Endothelial cell of umbilical vein (primary cell): ENCODE measurements at regions of chr17 and their contacts with region 1.

Region 1: DNA sequence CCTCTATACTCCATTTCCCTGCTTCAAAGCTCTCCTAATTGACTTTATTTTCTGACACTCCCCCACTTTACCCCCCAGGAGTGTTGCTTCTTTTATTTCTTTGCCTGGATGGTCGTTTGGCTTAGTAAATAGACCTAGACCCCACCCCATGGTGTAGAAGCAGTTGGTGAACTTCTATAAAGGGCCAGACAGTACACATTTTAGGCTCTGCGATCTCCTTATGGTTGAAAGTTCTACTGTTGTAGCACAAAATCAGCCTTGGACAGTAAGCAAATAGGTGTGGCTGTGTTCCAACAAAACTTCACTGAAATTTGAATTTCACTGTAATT is 31.9 kb downstream of the ZNF287 start:
- DNase-seq: no peak
- H3K4me3 ChIP-seq: no peak overlapping the region
- H3K27ac ChIP-seq: no peak overlapping the region
- H3K4me1 ChIP-seq: peaks cover 2% of the 10 kb centered on the region
- H3K27me3 ChIP-seq: peaks cover 3 to 4% of the 10 kb centered on the region in 2 experiments
- CTCF ChIP-seq: no peak
- POLR2A ChIP-seq: no peak

Region 2: GRCh38 chr17:16486373-16487250 is 50.5 kb before region 1 on chr17:
- CTCF ChIA-PET with region 1: interaction called, 6 read pairs
- POLR2A ChIA-PET with region 1: no interaction called
- dilution Hi-C with region 1: no loop called
- intact Hi-C with region 1: loop called (anchors 2 kb)
- DNase-seq: peak; percentile 83
- H3K4me3 ChIP-seq: peak overlapping the region in 2 of 3 experiments; percentile 5 to 9
- H3K27ac ChIP-seq: peak overlapping the region; percentile 80
- H3K4me1 ChIP-seq: peaks cover 41% of the 10 kb centered on the region
- H3K27me3 ChIP-seq: peaks cover 0 to 6% of the 10 kb centered on the region in 2 experiments
- CTCF ChIP-seq: no peak
- POLR2A ChIP-seq: peak; percentile 52

Region 3: DNA sequence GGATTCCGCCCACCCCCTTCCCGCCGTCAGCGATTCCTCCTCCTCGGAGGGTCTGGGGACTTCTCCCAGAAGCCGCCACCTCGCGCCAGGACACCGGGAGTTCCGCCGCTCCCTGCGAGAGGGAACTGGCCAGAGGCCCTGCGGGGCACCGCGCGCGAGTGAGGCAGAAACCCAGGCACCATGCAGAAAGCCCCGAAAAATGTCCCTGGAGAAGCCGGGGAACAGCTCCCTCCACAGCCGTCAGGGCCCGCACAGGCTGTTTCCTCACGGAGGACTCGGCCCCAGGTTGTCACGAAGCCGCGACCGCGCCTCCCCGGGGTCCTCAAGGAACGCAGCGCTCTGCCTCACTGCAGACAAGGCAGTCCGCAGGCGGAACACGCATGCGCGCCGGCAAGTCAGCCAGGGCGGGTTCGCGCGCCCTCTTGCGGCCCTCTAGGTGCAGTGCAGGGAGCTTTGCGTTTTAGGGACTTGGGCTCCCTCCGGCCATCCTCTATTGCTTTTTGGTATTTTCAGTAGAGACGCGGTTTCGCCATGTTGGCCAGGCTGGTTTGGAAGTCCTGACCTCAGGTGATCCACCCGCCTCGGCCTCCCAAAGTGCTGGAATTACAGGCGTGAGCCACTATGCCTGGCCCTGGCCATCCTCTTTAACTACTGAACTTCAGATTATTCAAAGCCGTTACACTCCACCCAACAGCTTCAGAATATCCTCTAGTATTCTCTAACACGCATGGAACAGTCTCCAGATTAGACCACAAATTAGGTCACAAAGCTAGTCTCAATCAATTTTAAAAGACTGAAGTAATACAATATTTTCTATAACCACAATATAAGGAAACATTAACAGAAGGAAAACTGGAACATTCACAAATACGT is 52.2 kb after region 1 on chr17:
- CTCF ChIA-PET with region 1: interaction called, 27 read pairs
- POLR2A ChIA-PET with region 1: no interaction called
- dilution Hi-C with region 1: no loop called
- intact Hi-C with region 1: loop called (anchors 1 kb)
- DNase-seq: peak; percentile 87
- H3K4me3 ChIP-seq: peak overlapping the region; percentile 34 to 50 (median 35)
- H3K27ac ChIP-seq: no peak overlapping the region
- H3K4me1 ChIP-seq: peaks cover 4% of the 10 kb centered on the region
- H3K27me3 ChIP-seq: peaks cover 23 to 31% of the 10 kb centered on the region in 2 experiments
- CTCF ChIP-seq: peak; percentile 96 to 100
- POLR2A ChIP-seq: no peak

Region 4: DNA sequence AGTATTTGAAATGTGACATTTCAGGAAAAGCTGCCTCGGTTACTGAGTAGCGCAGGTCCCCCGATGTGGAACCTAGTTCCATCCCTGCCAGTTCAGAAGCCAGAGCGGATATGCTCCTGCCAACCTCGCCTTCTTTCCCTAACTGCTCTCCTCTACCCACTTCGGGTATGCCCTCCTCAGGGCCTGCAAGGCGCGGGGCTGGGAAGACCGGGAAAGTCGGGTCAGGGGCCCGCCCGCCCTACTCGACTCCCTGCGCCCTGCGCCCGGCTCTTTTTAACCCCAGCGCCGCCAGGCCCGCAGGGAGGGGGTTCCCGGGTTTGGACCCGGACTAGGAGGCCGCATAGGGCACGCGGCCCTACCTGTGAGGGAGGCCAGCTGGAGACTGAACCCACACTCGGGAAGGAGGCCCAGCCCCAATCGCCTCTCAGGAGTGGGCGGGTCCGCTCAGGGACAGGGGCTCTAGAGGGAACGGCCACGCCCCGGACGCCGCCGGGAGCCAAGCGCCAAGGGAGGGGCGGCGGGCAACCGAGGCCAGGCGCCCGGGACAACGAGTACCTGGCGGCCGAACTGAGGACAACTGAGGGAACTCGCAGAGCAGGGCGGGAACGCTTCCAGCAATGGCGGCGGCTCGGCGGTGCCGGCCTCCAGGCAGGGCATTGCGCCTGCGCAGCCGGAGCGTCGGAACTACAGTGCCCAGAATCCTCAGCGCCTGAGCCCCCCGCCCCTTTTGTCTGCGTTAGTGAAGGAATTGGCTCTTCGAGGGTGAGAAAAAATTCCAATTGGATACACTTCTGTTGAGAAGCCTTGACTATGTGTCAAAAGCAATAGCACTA is 116.3 kb after region 1 on chr17 and contains the start of gene ZNF624:
- CTCF ChIA-PET with region 1: no interaction called
- POLR2A ChIA-PET with region 1: no interaction called
- dilution Hi-C with region 1: no loop called
- intact Hi-C with region 1: loop called (anchors 5 kb)
- DNase-seq: peak; percentile 95
- H3K4me3 ChIP-seq: peak within 1 kb of the TSS; percentile 60 to 79 (median 75)
- H3K27ac ChIP-seq: peak within 1 kb of the TSS; percentile 57
- H3K4me1 ChIP-seq: peaks cover 11% of the 10 kb centered on the region
- H3K27me3 ChIP-seq: peaks cover 2 to 9% of the 10 kb centered on the region in 2 experiments
- CTCF ChIP-seq: no peak
- POLR2A ChIP-seq: no peak
- total RNA-seq, gene ZNF624: 5.1 and 5.7 TPM in 2 replicates

Region 5: GRCh38 chr17:16991349-16992009 is 454.4 kb after region 1 on chr17:
- CTCF ChIA-PET with region 1: interaction called, 24 read pairs
- POLR2A ChIA-PET with region 1: no interaction called
- dilution Hi-C with region 1: no loop called
- intact Hi-C with region 1: loop called (anchors 1 kb)
- DNase-seq: peak; percentile 33
- H3K4me3 ChIP-seq: no peak overlapping the region
- H3K27ac ChIP-seq: no peak overlapping the region
- H3K4me1 ChIP-seq: no peaks in the 10 kb centered on the region
- H3K27me3 ChIP-seq: peaks cover 3 to 12% of the 10 kb centered on the region in 2 experiments
- CTCF ChIP-seq: peak; percentile 84 to 91
- POLR2A ChIP-seq: no peak